Right cardiac atrium (tissue), 5 donors: ENCODE measurements at regions of chr6 and their contacts with region 1.

Region 1: GRCh38 chr6:30489081-30490025 is at the start of gene HLA-E:
- DNase-seq: peak; percentile 91 to 96 (median 93)
- ATAC-seq: peak; percentile 94 to 97
- H3K4me3 ChIP-seq: peak within 1 kb of the TSS; percentile 65
- H3K27ac ChIP-seq: peak within 1 kb of the TSS; percentile 76
- H3K4me1 ChIP-seq: no peaks in the 10 kb centered on the region
- H3K27me3 ChIP-seq: no peaks in the 10 kb centered on the region
- total RNA-seq, gene HLA-E: 180 to 230 (median 214) TPM

Region 2: DNA sequence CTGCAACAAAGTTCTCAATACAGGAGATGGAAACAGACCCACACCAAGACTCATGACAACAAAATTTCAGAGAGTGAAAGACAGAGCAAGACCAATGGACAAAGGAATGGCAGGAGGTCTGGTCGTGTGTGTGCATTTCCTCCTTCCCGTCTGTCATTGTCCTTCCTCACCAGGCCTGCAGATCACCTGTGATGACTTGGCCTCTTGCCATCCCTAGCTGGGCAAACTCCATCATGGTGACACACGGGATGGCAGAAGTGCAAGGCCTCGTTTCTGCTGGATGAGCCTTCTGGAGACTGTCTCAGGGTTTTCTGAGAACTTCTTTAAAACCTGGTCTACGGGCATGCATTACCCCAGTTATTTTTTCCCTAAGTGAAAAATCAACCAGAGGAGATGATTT is 95.2 kb before region 1 on chr6:
- intact Hi-C with region 1: no loop called
- DNase-seq: no peak
- ATAC-seq: no peak
- H3K4me3 ChIP-seq: no peak overlapping the region
- H3K27ac ChIP-seq: no peak overlapping the region
- H3K4me1 ChIP-seq: no peaks in the 10 kb centered on the region
- H3K27me3 ChIP-seq: peaks cover 3% of the 10 kb centered on the region

Region 3: GRCh38 chr6:30533460-30534294 is 44.3 kb after region 1 on chr6:
- intact Hi-C with region 1: loop called in 3 of 4 experiments (anchors 5 kb)
- DNase-seq: no peak
- ATAC-seq: no peak
- H3K4me3 ChIP-seq: no peak overlapping the region
- H3K27ac ChIP-seq: no peak overlapping the region
- H3K4me1 ChIP-seq: no peaks in the 10 kb centered on the region
- H3K27me3 ChIP-seq: no peaks in the 10 kb centered on the region

Region 4: DNA sequence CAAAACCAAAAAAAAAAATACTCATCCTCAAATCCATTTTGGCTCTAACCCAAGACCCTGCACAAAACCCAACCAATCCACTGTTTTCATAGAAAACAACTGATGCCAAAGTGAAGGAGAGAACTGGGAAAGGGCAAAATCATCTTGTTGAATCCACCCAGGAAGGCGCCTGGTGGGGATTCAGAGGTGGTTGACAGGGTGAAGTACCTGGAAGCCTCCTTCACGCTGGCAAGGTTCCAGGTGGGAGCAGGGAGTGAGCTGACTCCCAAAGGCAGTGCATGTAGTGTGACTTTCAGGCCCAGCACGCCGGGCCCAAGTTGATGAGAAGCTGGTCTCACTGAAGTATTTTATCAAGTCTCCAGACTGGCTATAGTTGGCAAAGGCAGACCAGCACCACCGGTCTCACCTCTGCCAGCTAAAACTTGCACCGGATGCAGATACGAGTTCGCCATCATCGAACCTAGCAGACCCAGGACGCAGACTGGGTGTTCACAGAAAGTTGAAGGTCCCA is 111.2 kb after region 1 on chr6:
- intact Hi-C with region 1: loop called in 1 of 4 experiments (anchors 10 kb)
- DNase-seq: peak in 2 of 3 donors; percentile 50 to 76
- ATAC-seq: peak in 1 of 2 donors; percentile 6
- H3K4me3 ChIP-seq: no peak overlapping the region
- H3K27ac ChIP-seq: no peak overlapping the region
- H3K4me1 ChIP-seq: no peaks in the 10 kb centered on the region
- H3K27me3 ChIP-seq: no peaks in the 10 kb centered on the region